ENCODE measurements at regions of chr1 and their contacts with region 1.

Region 1: DNA sequence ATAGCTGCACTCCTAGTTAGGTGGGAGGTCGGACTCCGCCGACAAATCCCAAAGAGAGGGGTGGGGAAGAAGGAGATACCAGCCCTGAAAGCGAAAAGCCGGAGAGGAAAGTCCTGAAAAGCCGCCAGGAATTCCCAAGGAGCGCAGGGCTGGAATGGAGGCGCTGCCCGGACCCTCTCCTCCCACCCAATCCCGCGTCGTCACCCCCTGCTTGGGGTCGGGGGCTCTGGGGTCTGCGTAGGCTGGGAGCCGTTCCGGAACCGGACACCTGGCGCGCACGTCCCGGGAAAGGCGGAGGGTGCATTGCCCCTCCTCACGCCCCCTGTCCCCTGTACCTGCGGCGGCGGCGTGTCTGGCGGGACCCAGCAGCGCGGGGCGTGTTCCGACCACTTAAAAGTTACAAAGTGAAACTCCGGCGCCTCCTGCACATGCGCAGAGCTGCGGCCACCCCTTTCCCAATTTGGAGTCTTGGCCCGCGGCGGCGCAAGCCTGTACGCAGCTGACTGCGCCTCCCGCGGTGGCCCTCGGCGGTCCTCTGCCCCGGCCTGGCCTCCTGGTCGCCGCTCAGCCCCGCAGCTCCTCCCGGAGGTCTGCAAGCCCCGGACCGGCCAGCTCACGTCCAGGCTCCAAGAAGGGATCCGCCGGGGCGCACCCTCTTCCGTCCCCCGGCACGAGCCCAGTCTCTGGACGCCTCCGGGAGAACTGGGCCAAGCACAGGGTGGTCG is at the start of gene TMEM63A:
- DNase-seq: peak; percentile 86 to 94 (median 89)
- H3K4me3 ChIP-seq: peak within 1 kb of the TSS; percentile 92
- H3K4me3 Mint-ChIP-seq: peak within 1 kb of the TSS; percentile 94 to 99 (median 97)
- H3K27ac ChIP-seq: peak within 1 kb of the TSS; percentile 95
- H3K27ac Mint-ChIP-seq: peak within 1 kb of the TSS; percentile 90 to 97 (median 96)
- H3K4me1 ChIP-seq: peaks cover 48% of the 10 kb centered on the region
- H3K4me1 Mint-ChIP-seq: peaks cover 50 to 54% (median 53%) of the 10 kb centered on the region in 3 donors
- H3K27me3 ChIP-seq: no peaks in the 10 kb centered on the region
- H3K27me3 Mint-ChIP-seq: no peaks in the 10 kb centered on the region
- total RNA-seq, gene TMEM63A: 51.4 to 55.5 TPM

Region 2: GRCh38 chr1:225777583-225778336 is 104.4 kb before region 1 on chr1 and contains the start of gene SRP9:
- CTCF ChIA-PET with region 1: interaction called, 23 read pairs
- POLR2A ChIA-PET with region 1: interaction called, 26 read pairs
- DNase-seq: peak; percentile 98 to 99 (median 99)
- H3K4me3 ChIP-seq: peak within 1 kb of the TSS; percentile 95
- H3K4me3 Mint-ChIP-seq: no peak within 1 kb of the TSS
- H3K27ac ChIP-seq: peak within 1 kb of the TSS; percentile 99
- H3K27ac Mint-ChIP-seq: no peak within 1 kb of the TSS
- H3K4me1 ChIP-seq: peaks cover 50% of the 10 kb centered on the region
- H3K4me1 Mint-ChIP-seq: peaks cover 34 to 49% (median 35%) of the 10 kb centered on the region in 3 donors
- H3K27me3 ChIP-seq: no peaks in the 10 kb centered on the region
- H3K27me3 Mint-ChIP-seq: no peaks in the 10 kb centered on the region
- total RNA-seq, gene SRP9: 339 TPM

Region 3: GRCh38 chr1:225866061-225866837 is 15.9 kb before region 1 on chr1:
- CTCF ChIA-PET with region 1: interaction called, 9 read pairs
- POLR2A ChIA-PET with region 1: interaction called, 14 read pairs
- DNase-seq: peak; percentile 40 to 82 (median 70)
- H3K4me3 ChIP-seq: no peak overlapping the region
- H3K4me3 Mint-ChIP-seq: peak overlapping the region; percentile 2 to 79 (median 71)
- H3K27ac ChIP-seq: no peak overlapping the region
- H3K27ac Mint-ChIP-seq: peak overlapping the region; percentile 75 to 97 (median 92)
- H3K4me1 ChIP-seq: peaks cover 31% of the 10 kb centered on the region
- H3K4me1 Mint-ChIP-seq: peaks cover 40 to 51% (median 48%) of the 10 kb centered on the region in 3 donors
- H3K27me3 ChIP-seq: no peaks in the 10 kb centered on the region
- H3K27me3 Mint-ChIP-seq: no peaks in the 10 kb centered on the region

Region 4: DNA sequence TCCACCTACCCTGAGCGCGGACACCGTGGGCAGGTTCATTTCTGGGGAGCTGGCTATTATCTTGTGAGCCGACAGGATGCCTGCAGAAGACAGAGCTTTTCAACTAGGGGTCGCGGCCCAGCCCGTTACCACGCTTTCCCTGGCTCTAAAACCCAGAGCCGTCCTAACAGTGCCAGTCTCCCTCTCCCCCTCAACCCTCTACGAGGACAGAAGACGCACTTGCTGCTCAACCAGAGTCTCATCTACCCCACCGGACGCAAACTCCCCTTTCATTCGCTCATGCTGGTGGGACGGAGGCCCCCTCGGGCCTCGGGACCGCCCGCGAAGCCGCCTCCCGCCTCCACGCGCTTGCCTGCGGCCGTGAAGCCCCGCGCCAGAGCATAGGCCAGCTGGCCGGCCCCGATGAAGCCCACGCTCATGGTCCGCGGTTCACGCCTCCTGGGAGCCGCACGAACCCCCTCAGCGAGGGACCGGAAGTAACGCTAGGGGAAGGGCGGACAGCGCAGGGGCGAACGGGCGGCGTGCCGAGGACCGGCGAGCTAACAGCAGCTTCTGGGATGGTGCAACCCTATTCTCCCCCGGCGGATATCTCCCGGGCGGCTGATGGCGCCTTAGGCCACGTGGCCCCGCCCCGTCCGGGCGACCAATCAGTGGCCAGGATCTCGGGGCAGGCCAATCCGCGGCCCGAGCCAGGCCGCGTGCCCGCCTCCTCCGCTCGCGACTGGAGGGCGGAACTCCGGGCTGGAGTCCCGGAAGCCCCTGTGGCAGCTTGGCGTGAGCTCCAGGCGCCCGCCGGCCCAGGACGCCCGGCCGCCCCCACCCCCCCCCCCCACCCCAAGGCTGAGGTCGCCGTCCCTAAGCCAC is 41.8 kb after region 1 on chr1 and contains the start of gene PYCR2:
- CTCF ChIA-PET with region 1: interaction called, 6 read pairs
- POLR2A ChIA-PET with region 1: interaction called, 22 read pairs
- DNase-seq: peak; percentile 91 to 96 (median 94)
- H3K4me3 ChIP-seq: peak within 1 kb of the TSS; percentile 99
- H3K4me3 Mint-ChIP-seq: peak within 1 kb of the TSS; percentile 92 to 99 (median 95)
- H3K27ac ChIP-seq: peak within 1 kb of the TSS; percentile 96
- H3K27ac Mint-ChIP-seq: peak within 1 kb of the TSS; percentile 76 to 98 (median 94)
- H3K4me1 ChIP-seq: peaks cover 61% of the 10 kb centered on the region
- H3K4me1 Mint-ChIP-seq: peaks cover 30 to 55% (median 40%) of the 10 kb centered on the region in 3 donors
- H3K27me3 ChIP-seq: no peaks in the 10 kb centered on the region
- H3K27me3 Mint-ChIP-seq: no peaks in the 10 kb centered on the region
- total RNA-seq, gene PYCR2: 130 to 131 TPM